Breast epithelium (tissue), 4 donors: ENCODE measurements at regions of chr1 and their contacts with region 1.

Region 1: DNA sequence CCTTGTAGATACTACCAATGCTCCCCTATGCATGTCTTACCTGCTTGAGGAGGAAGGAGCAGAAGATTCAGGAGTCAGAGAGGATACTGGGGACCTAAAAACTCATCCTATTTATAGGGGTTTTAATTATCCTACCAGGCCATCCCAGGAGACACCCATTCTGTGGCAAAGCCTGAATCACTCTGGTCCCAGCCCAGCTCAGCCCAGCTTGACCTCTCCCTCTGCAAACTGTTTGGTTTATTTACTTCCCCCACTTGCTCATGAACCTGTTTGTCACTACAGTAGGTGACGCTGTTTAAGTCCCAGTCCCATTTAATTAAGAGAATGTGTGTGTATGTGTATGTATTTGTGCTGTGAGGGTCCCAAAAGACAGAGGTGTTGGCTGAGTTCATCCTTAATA is at the start of gene RPTN:
- DNase-seq: no peak
- H3K4me3 ChIP-seq: no peak within 1 kb of the TSS
- H3K27ac ChIP-seq: no peak within 1 kb of the TSS
- H3K4me1 ChIP-seq: no peaks in the 10 kb centered on the region
- H3K27me3 ChIP-seq: no peaks in the 10 kb centered on the region
- CTCF ChIP-seq: no peak
- POLR2A ChIP-seq: no peak
- total RNA-seq, gene RPTN: not detected

Region 2: GRCh38 chr1:150281837-150282653 is 1877.1 kb before region 1 on chr1 and contains the start of gene CIART:
- intact Hi-C with region 1: no loop called
- DNase-seq: peak; percentile 92 to 98
- H3K4me3 ChIP-seq: peak within 1 kb of the TSS; percentile 43 to 75 (median 59)
- H3K27ac ChIP-seq: peak within 1 kb of the TSS; percentile 89 to 91
- H3K4me1 ChIP-seq: peaks cover 0 to 6% of the 10 kb centered on the region in 2 donors
- H3K27me3 ChIP-seq: no peaks in the 10 kb centered on the region
- CTCF ChIP-seq: no peak
- POLR2A ChIP-seq: no peak
- total RNA-seq, gene CIART: 2.6 to 7.4 (median 4.3) TPM

Region 3: GRCh38 chr1:152182431-152182830 is 23.3 kb after region 1 on chr1:
- intact Hi-C with region 1: loop called (anchors 2 kb)
- DNase-seq: no peak
- H3K4me3 ChIP-seq: no peak overlapping the region
- H3K27ac ChIP-seq: peak overlapping the region in 1 of 2 donors; percentile 3
- H3K4me1 ChIP-seq: no peaks in the 10 kb centered on the region
- H3K27me3 ChIP-seq: no peaks in the 10 kb centered on the region
- CTCF ChIP-seq: no peak
- POLR2A ChIP-seq: no peak

Region 4: GRCh38 chr1:152459596-152460528 is 300.7 kb after region 1 on chr1:
- intact Hi-C with region 1: no loop called
- DNase-seq: peak in 1 of 2 donors; percentile 29
- H3K4me3 ChIP-seq: no peak overlapping the region
- H3K27ac ChIP-seq: no peak overlapping the region
- H3K4me1 ChIP-seq: no peaks in the 10 kb centered on the region
- H3K27me3 ChIP-seq: peaks cover 0 to 4% of the 10 kb centered on the region in 2 donors
- CTCF ChIP-seq: peak in 2 of 3 donors; percentile 36 to 47
- POLR2A ChIP-seq: no peak